ENCODE measurements at regions of chr14 and their contacts with region 1.

Region 1: DNA sequence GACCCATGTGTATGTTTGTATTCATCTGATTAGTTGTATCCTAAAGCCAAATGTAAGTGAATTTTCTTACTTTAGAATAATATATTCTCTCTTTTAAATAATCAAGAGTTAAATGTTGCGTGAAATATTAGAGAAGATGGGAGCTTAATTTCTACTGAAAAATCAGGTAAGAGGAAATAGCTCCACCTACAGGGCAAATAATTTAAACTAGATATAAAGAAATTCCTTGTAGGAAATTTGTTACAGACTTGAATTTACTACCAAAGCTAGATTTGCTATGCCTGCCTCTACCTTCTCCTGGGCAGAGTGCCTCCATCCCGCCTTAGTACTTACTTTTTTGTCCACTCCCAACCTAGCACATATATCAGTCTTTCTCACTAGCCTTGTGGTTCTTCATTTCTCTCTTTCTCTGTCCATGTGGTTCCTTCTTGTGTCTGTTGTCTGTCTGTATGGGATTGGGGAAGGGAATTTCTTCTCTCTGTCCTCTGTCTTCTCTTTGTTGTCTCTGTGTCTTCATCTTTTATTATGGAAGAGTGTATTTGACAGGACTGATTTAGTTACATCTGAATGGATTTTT is 44.7 kb downstream of the PALS1 start:
- DNase-seq: no peak
- H3K4me3 ChIP-seq: no peak overlapping the region
- H3K27ac ChIP-seq: no peak overlapping the region
- H3K4me1 ChIP-seq: no peaks in the 10 kb centered on the region
- H3K27me3 ChIP-seq: no peaks in the 10 kb centered on the region
- CTCF ChIP-seq: peak in 2 of 3 donors; percentile 43 to 53
- POLR2A ChIP-seq: no peak

Region 2: GRCh38 chr14:67166450-67166853 is 119.5 kb before region 1 on chr14:
- intact Hi-C with region 1: loop called (anchors 10 kb)
- DNase-seq: no peak
- H3K4me3 ChIP-seq: no peak overlapping the region
- H3K27ac ChIP-seq: no peak overlapping the region
- H3K4me1 ChIP-seq: no peaks in the 10 kb centered on the region
- H3K27me3 ChIP-seq: no peaks in the 10 kb centered on the region
- CTCF ChIP-seq: peak; percentile 55 to 81 (median 76)
- POLR2A ChIP-seq: no peak